Panc1 (cell line): ENCODE measurements at regions of chr4 and their contacts with region 1.

Region 1: GRCh38 chr4:10007793-10008608 is 13.3 kb downstream of the SLC2A9 start:
- DNase-seq: no peak
- ATAC-seq: peak; percentile 69
- H3K4me3 ChIP-seq: peak overlapping the region in 1 of 2 experiments; percentile 49; a peak in 2 of 4 replicates
- H3K27ac ChIP-seq: peak overlapping the region; percentile 85
- H3K4me1 ChIP-seq: peaks cover 38% of the 10 kb centered on the region
- H3K27me3 ChIP-seq: no peaks in the 10 kb centered on the region
- CTCF ChIP-seq: no peak

Region 2: DNA sequence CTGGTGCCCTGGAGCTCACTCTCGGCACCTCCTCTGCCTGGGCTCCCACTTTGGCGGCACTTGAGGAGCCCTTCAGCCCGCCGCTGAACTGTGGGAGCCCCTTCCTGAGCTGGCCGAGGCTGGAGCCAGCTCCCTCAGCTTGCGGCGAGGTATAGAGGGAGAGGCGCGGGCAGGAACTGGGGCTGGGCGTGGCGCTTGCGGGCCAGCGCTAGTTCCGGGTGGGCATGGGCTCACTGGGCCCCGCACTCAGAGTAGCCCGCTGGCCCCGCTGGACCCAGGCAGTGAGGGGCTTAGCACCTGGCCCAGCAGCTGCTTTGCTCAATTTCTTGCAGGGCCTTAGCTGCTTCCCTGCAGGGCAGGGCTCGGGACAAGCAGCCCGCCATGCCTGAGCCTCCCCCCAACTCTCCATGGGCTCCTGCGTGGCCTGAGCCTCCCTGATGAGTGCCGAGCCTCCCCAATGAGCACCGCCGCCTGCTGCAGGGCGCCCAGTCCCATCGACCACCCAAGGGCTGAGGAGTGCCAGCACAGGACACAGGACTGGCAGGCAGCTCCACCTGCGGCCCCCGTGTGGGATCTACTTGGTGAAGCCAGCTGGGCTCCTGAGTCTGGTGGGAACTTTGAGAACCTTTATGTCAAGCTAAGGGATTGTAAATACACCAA is 864.5 kb before region 1 on chr4:
- CTCF ChIA-PET with region 1: no interaction called
- POLR2A ChIA-PET with region 1: no interaction called
- in situ Hi-C with region 1: no loop called
- intact Hi-C with region 1: no loop called
- DNase-seq: no peak
- ATAC-seq: no peak
- H3K4me3 ChIP-seq: no peak overlapping the region
- H3K27ac ChIP-seq: no peak overlapping the region
- H3K4me1 ChIP-seq: no peaks in the 10 kb centered on the region
- H3K27me3 ChIP-seq: no peaks in the 10 kb centered on the region
- CTCF ChIP-seq: no peak

Region 3: GRCh38 chr4:9880406-9881197 is 127.4 kb before region 1 on chr4:
- CTCF ChIA-PET with region 1: no interaction called
- POLR2A ChIA-PET with region 1: no interaction called
- in situ Hi-C with region 1: no loop called
- intact Hi-C with region 1: loop called (anchors 1 kb)
- DNase-seq: no peak
- ATAC-seq: no peak
- H3K4me3 ChIP-seq: no peak overlapping the region
- H3K27ac ChIP-seq: no peak overlapping the region
- H3K4me1 ChIP-seq: no peaks in the 10 kb centered on the region
- H3K27me3 ChIP-seq: no peaks in the 10 kb centered on the region
- CTCF ChIP-seq: no peak